K562 (cell line): ENCODE measurements at regions of chr19 and their contacts with region 1.

Region 1: DNA sequence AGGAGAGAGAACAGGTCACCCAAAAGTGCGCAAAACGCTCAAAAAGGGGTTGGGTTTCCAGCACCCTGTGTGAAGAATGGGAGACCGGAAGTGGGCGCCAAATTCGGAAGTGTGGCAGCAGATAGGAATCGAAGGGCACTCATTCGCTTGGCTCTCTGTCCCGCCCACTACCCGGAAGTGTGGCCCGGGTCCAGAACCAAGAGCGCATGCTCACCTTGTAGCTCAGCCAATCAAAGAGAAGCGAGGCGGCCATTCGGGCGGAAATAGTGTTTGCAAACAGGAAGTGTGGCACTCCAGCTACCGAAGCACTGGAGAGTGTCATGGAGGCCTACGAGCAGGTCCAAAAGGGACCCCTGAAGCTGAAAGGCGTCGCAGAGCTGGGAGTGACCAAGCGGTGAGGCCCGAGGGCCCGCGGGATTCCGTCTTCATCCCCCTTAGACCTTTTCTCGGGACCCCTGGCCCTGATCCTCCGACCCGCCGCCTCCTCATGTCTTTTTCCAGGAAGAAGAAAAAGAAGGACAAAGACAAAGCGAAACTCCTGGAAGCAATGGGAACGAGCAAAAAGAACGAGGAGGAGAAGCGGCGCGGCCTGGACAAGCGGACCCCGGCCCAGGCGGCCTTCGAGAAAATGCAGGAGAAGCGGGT is at the start of gene FAM32A:
- DNase-seq: peak; percentile 99 to 100 (median 99)
- ATAC-seq: peak; percentile 98
- H3K4me3 ChIP-seq: peak within 1 kb of the TSS; percentile 92
- H3K27ac ChIP-seq: peak within 1 kb of the TSS; percentile 75
- H3K4me1 ChIP-seq: peaks cover 0 to 16% of the 10 kb centered on the region in 2 experiments; a peak in 3 of 5 replicates
- H3K27me3 ChIP-seq: no peaks in the 10 kb centered on the region; a peak in 1 of 5 replicates
- CTCF ChIP-seq: no peak; a peak in 1 of 6 replicates
- EP300 ChIP-seq: no peak
- POLR2A ChIP-seq: peak; percentile 86
- RAD21 ChIP-seq: no peak
- polyA plus RNA-seq, gene FAM32A: 30.7 to 43.0 TPM

Region 2: DNA sequence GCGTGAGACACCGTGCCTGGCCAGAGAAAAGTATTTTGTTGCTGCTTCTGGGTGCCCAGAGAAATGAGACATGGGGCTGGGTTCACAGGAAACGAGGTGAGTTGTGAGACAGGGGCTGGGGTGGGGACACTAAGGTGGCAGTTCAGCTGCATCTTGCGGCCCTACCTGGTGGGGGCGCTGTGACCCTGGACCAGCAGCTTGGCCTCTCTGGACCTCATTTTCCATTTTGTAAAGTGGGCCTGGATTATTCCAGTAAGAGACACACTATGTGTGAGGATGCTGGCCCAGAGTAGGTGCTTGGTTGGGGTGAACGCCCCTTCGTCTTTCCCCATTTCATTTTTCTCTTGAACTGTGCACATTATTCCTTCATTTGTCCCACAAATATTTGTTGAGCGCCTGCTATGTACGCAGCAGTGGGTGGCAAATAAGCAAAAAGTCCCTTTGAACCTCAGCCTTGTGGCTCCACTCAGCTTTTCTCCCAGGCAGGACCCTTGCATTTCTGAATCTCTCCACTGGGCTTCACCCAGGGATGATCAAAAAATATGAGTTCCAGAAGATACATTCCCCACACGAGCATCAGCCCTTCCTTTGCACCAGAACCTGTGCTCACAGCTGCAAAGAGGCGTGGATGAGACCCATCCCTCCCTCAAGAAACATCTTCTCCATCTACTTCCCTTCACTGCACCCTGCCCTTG is 343.2 kb before region 1 on chr19:
- CTCF ChIA-PET with region 1: no interaction called
- POLR2A ChIA-PET with region 1: no interaction called
- in situ Hi-C with region 1: no loop called
- intact Hi-C with region 1: loop called (anchors 10 kb)
- DNase-seq: peak; percentile 47 to 53 (median 48)
- ATAC-seq: no peak
- H3K4me3 ChIP-seq: no peak overlapping the region
- H3K27ac ChIP-seq: no peak overlapping the region
- H3K4me1 ChIP-seq: peaks cover 25 to 42% of the 10 kb centered on the region in 2 experiments
- H3K27me3 ChIP-seq: no peaks in the 10 kb centered on the region
- CTCF ChIP-seq: peak; percentile 63 to 80 (median 64)
- EP300 ChIP-seq: no peak
- POLR2A ChIP-seq: no peak
- RAD21 ChIP-seq: peak; percentile 24 to 58

Region 3: DNA sequence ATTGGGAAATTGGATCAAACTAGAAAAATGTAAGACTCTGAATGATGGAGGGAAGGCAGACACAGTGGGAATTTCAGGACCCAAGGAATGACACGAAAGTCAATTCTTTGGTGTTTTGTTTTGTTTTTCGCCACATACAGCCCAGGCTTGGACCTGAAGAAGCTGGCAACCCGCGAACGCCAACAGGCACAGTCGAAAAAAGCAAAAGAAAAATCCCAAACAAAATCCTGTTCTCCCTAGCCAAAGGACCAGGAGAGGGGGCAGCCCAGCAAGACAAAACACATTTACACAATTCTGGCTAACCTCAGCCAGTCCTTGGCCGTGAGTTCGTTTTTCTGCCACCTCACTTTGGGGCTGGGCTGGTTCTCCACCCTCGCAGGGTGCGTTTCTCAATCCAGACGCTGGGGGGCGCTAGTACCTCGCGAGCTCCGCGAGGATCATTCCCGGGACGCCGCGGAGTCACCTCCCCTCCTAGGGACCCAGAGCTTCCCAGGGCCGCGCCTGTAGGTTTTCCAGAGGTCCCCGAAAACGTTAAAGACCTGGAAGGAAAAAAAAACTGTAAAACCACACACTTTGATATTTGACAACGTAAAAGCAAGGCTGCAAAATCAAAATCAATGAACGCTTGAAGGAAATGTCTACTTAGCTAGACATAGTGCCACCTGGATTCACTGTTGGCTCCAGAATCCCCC is 143.8 kb before region 1 on chr19:
- CTCF ChIA-PET with region 1: interaction called, 29 read pairs
- POLR2A ChIA-PET with region 1: interaction called, 3 read pairs
- in situ Hi-C with region 1: loop called (anchors 5 kb)
- intact Hi-C with region 1: loop called (anchors 1 kb)
- DNase-seq: peak; percentile 77 to 94 (median 90)
- ATAC-seq: peak; percentile 93
- H3K4me3 ChIP-seq: no peak overlapping the region
- H3K27ac ChIP-seq: no peak overlapping the region
- H3K4me1 ChIP-seq: peaks cover 0 to 9% of the 10 kb centered on the region in 2 experiments; a peak in 3 of 5 replicates
- H3K27me3 ChIP-seq: peaks cover 1 to 29% of the 10 kb centered on the region in 2 experiments; a peak in 3 of 5 replicates
- CTCF ChIP-seq: peak; percentile 90 to 95 (median 93)
- EP300 ChIP-seq: no peak
- POLR2A ChIP-seq: no peak
- RAD21 ChIP-seq: peak; percentile 88 to 94

Region 4: GRCh38 chr19:16197622-16198369 is 12.6 kb after region 1 on chr19 and contains the start of gene AP1M1:
- CTCF ChIA-PET with region 1: no interaction called
- POLR2A ChIA-PET with region 1: interaction called, 15 read pairs
- in situ Hi-C with region 1: no loop called
- intact Hi-C with region 1: no loop called
- DNase-seq: peak; percentile 96 to 98 (median 97)
- ATAC-seq: peak; percentile 94
- H3K4me3 ChIP-seq: peak within 1 kb of the TSS; percentile 78
- H3K27ac ChIP-seq: peak within 1 kb of the TSS; percentile 58
- H3K4me1 ChIP-seq: peaks cover 18 to 25% of the 10 kb centered on the region in 2 experiments; a peak in 4 of 5 replicates
- H3K27me3 ChIP-seq: no peaks in the 10 kb centered on the region
- CTCF ChIP-seq: no peak
- EP300 ChIP-seq: no peak
- POLR2A ChIP-seq: no peak; the same call in none of the 2 replicates
- RAD21 ChIP-seq: no peak
- polyA plus RNA-seq, gene AP1M1: 0.87 to 3.0 TPM

Region 5: DNA sequence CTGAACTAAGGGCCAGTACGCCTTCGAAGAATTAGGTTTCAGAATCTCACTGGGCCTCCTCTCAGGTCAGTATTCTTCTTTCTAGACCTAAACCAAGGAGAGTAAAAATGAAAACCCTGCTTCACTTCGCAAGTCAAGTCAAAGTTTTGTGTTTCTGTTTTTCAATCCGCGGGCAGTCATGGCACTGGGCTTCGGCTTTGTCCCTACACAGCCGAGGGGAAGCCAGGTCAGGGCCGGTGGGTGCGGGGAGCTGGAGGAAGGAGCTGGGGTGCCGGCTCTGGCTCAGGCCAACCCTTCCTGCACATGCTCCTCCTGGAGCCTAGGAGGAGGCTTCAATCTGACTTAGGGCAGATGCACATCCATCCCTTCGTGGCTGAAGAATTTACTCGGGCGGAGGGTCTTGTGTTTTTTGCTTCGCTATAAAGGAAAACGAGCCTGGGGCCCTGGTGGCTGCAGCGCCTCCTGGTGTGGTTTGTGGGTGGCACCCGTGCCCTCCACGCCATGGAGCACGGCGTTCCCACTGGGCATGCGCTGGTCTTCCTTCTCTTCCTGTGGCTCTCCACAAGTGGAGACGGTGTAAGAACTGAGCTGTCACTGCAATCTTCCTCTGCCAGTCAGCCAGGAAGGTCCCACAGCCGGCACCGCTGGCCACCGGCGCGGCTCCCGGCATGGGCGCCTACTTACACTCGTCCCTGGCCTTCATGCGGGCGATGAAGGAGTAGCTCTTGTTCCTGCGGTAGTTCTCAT is 333.4 kb after region 1 on chr19:
- CTCF ChIA-PET with region 1: no interaction called
- POLR2A ChIA-PET with region 1: no interaction called
- in situ Hi-C with region 1: no loop called
- intact Hi-C with region 1: no loop called
- DNase-seq: peak in 1 of 4 experiments; percentile 13
- ATAC-seq: no peak
- H3K4me3 ChIP-seq: no peak overlapping the region
- H3K27ac ChIP-seq: no peak overlapping the region
- H3K4me1 ChIP-seq: peaks cover 0 to 14% of the 10 kb centered on the region in 2 experiments; a peak in 2 of 5 replicates
- H3K27me3 ChIP-seq: no peaks in the 10 kb centered on the region
- CTCF ChIP-seq: 0 out of 6 replicates have a peak, but pooled peaks of 1 of the 3 experiments have one; percentile 20
- EP300 ChIP-seq: no peak
- POLR2A ChIP-seq: 0 out of 2 replicates have a peak, but pooled peaks have one; percentile 9
- RAD21 ChIP-seq: no peak